Adrenal gland (tissue), 19 donors: ENCODE measurements at regions of chr19 and their contacts with region 1.

Region 1: DNA sequence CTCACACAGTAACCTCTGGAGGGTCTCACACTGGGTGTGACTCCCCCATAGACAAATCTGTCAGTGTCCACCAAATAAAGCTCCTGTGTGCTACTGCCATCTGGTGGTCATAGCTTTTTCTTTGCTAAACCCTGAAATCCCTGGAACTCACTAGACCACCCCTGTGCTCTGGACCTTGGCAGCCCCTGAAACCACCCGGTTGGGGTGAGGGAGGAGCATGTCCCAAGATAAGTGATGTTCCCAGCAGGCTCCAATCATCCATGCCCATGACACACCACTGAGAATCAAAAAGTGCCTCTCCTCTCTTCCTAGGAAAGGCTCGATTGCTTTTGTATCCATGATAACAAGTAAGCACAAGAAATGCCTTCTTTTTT is 6.5 kb upstream of the HSD17B14 start:
- DNase-seq: peak in 6 of 7 donors; percentile 44 to 64 (median 56)
- H3K4me3 ChIP-seq: no peak overlapping the region
- H3K27ac ChIP-seq: no peak overlapping the region
- H3K4me1 ChIP-seq: no peaks in the 10 kb centered on the region
- H3K27me3 ChIP-seq: no peaks in the 10 kb centered on the region
- CTCF ChIP-seq: peak; percentile 67 to 86 (median 74)
- POLR2A ChIP-seq: no peak

Region 2: DNA sequence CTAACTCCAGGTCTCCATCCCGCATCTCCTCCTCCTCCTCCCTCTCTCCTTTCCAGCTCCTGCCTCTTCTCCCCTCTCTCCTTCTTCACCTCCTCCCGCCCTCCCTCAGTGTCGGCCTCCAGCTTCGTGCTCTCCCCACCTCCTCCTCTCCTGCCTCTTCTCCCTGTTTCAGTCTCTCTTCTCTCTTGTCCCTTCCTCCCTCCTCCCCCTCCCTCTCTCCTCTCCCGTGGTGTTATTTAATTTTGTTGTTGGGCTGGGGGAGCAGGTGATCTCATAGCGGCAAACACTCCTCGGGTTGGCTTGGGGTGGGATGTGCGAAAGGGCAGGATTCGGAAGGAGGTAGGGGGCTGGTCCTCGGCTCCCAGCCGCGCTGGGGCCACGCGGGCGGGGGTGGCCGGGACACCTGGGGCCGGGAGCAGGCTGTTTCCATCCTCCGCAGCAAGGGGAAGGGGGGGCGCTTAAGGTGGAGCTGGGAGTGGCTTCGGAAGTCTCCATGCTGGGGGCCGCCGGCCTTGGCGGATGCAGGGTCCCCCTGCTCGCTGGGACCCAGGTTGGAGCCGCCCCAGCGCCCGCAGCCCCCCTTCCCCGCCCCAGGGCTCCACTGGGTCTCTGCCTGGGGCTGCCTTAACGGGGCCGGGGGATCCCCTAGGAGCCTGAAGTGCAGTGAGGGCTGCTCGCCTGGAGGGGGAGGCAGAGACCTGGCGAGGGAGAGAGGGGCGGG is 196.6 kb before region 1 on chr19 and contains the start of gene CA11:
- intact Hi-C with region 1: loop called in 1 of 2 experiments (anchors 10 kb)
- DNase-seq: peak; percentile 89 to 94 (median 92)
- H3K4me3 ChIP-seq: peak within 1 kb of the TSS in 3 of 4 donors; percentile 22 to 60 (median 49)
- H3K27ac ChIP-seq: peak within 1 kb of the TSS; percentile 75 to 93 (median 83)
- H3K4me1 ChIP-seq: peaks cover 11 to 13% of the 10 kb centered on the region in 2 donors
- H3K27me3 ChIP-seq: no peaks in the 10 kb centered on the region
- CTCF ChIP-seq: peak; percentile 80 to 96 (median 92)
- POLR2A ChIP-seq: peak; percentile 14 to 60
- total RNA-seq, gene CA11: 6.0 to 44.2 (median 21.7) TPM

Region 3: DNA sequence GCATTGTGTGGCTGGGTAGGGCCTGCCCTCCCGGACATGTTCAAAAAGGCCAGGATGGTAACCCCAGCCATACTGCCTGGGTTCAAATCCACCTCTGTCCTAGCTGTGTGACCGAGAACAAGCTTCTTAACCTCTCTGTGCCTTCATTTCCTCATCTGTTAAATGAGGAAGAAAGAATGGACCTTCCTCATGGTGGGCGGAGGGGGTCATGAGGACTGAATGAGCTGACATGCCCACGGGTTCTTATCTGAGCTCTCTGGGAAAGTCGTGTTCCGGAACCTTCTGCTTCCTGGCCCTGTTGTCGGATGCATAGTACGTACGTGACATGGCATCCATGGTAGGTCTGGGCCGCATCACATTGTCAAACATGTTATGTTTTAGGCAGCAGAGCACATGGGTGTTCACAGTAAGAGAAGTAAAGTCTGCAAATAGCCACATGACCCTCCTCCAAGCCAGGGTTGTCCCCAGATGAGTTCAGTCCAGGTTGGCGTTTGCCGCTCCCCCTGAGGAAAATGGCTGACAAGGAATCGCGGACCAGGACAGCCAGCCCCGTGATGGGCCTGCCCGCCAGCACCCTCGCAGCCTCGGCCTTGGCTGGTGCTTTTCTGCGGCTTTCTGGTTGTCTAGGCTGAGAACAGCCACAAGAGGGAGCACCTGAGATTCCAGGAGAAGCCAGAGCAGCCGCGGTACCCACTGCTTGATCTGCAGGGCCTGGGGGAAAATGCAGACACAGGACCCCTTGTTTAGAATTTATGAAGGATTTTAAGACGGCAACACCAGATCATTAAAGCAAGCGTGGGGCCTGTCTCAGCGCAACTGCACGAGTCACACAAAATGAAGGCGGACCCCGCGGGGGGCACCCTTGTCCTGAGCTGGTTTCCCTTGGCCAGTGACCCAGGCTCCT is 167.6 kb before region 1 on chr19:
- intact Hi-C with region 1: loop called in 1 of 2 experiments (anchors 10 kb)
- DNase-seq: peak; percentile 86 to 95 (median 91)
- H3K4me3 ChIP-seq: no peak overlapping the region
- H3K27ac ChIP-seq: peak overlapping the region in 2 of 5 donors; percentile 59 to 62
- H3K4me1 ChIP-seq: peaks cover 0 to 9% of the 10 kb centered on the region in 2 donors
- H3K27me3 ChIP-seq: no peaks in the 10 kb centered on the region
- CTCF ChIP-seq: peak; percentile 72 to 89 (median 88)
- POLR2A ChIP-seq: no peak

Region 4: GRCh38 chr19:48780631-48781391 is 62.0 kb before region 1 on chr19:
- intact Hi-C with region 1: loop called in 1 of 2 experiments (anchors 2 kb)
- DNase-seq: peak; percentile 71 to 86 (median 83)
- H3K4me3 ChIP-seq: no peak overlapping the region
- H3K27ac ChIP-seq: peak overlapping the region; percentile 43 to 87 (median 85)
- H3K4me1 ChIP-seq: peaks cover 14 to 17% of the 10 kb centered on the region in 2 donors
- H3K27me3 ChIP-seq: no peaks in the 10 kb centered on the region
- CTCF ChIP-seq: no peak
- POLR2A ChIP-seq: peak in 1 of 2 donors; percentile 64

Region 5: DNA sequence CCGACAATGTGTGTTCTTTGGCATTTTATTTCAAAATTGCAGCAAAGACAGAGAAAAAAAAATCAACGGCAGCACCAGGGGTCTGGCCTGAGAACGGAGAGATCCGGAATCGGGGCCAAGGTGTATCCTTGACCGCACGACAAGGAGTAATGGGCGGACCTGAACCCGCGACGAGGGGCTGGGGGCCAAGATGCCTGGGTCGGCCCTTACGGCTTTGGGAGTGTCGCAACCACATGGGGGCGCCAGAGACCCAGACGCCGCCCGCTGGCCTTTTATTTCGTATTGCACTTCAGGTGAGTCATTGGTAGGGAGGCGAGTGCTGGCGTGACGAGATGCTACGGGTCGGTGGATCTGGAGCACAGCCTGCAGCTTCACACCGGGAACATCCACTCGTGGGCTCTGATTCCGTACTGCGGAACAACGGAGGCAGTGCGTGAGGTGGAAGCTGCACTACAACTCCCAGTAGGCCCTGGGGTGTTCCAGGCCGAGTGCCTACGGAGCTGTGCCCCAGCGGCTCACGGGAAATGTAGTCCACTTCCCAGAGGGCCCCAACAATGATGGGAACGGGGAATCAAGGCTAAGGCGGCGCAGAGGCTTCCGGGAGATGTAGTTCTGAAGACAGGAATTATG is 47.6 kb before region 1 on chr19:
- intact Hi-C with region 1: loop called in 1 of 2 experiments (anchors 2 kb)
- DNase-seq: peak; percentile 91 to 98 (median 95)
- H3K4me3 ChIP-seq: peak overlapping the region in 2 of 4 donors; percentile 7 to 28
- H3K27ac ChIP-seq: peak overlapping the region; percentile 26 to 93 (median 77)
- H3K4me1 ChIP-seq: peaks cover 0 to 11% of the 10 kb centered on the region in 2 donors
- H3K27me3 ChIP-seq: no peaks in the 10 kb centered on the region
- CTCF ChIP-seq: peak; percentile 85 to 99 (median 96)
- POLR2A ChIP-seq: peak in 1 of 2 donors; percentile 12

Region 6: DNA sequence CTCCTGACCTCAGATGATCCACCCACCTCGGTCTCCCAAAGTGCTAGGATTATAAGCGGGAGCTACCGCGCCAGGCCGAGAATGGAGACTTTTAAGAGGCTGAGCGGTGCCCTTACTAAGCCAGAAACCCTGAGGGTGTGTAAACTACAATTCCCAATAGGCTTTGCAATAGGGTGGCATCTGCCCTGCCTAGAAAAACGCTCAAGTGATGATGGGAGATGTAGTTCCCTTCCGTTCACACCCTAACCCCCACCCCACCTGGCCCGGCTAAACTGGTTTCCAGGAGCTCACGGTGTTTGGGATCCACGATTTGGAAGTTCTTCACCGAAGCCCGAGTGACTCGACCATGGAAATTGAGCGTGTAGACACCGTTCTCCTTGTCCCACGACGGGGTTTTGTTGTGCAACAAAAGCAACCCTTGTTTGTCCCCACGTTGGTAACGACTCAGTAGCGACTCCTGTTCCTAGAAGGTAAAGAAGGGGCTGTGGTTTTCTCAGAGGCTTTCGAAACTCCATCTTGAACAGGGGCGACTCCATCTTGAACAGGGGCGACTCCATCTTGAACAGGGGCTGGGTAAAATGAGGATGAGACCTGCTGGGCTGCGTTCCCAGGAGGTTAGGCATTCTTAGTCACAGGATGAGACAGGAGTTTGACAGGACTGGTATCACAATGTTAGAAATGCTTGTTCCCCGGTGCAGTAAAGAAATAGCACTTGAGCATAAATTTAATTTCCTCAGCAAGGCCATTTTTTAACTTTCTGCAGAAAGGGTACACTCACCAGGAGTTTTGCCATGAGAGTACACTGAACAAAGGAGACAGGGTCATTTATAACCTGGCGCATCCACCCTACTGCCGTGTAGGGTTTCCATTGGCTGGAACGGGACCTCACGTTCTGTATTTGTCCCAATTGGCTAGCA is 39.2 kb after region 1 on chr19:
- intact Hi-C with region 1: no loop called
- DNase-seq: peak in 1 of 7 donors; percentile 52
- H3K4me3 ChIP-seq: no peak overlapping the region
- H3K27ac ChIP-seq: no peak overlapping the region
- H3K4me1 ChIP-seq: no peaks in the 10 kb centered on the region
- H3K27me3 ChIP-seq: no peaks in the 10 kb centered on the region
- CTCF ChIP-seq: no peak
- POLR2A ChIP-seq: no peak